Posterior vena cava (tissue), 2 donors: ENCODE measurements at regions of chr2 and their contacts with region 1.

Region 1: DNA sequence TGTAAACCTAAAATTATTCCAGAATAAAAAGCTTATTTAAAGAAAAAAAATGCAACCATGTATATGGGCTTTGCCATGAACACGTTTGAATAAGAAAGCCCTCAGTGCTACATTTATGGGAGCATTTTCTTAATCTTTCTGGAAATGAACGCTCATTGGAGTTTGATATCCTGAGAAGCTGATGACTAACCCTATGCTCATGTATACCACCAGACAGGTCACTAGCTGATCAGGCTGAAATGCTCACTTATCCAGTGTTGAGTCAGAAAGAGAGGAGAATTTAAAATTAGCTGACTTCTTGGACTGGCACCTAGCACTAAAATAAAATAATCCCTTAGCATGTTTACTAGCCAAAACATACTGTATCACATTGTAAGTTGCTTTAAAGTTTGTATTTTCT is 254.9 kb upstream of the SIX3 start:
- DNase-seq: no peak

Region 2: DNA sequence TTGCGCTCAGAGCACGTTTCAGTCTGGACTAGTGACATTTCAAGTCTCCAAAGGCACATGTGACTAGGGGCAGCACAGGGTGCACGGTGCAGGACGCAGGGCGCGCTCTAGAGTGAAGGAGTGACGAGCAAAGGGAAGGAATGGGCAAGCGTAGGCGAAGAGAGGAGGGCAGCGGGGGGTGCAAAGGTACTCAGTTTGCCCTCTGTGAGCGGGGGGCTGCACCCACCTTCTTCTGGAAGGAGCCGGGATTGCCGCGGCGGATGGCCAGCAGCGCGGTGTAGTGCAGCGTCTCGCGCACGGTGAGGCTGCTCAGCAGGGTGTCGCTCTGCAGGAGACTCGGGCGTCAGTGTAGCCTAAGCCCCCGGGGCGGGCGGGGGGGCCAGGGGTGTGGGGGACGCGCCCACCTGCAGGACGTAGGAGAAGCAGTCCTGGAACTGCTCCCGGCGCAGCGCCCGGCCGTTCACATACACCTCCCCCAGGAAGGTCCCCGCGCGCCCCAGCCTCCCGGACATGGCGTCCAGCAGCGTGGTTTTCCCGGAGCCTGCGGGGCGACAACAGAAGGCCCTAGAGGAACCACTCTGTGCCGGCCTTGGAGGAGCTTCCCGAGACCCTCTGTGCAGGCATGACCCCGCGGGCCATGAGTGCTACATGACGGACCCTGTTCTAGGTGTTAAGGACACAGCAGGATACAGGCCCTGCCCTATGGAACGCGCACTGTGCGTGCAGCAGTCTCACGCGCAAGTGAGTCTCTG is 854.8 kb before region 1 on chr2:
- intact Hi-C with region 1: loop called in 1 of 2 experiments (anchors 10 kb)
- DNase-seq: peak; percentile 82

Region 3: DNA sequence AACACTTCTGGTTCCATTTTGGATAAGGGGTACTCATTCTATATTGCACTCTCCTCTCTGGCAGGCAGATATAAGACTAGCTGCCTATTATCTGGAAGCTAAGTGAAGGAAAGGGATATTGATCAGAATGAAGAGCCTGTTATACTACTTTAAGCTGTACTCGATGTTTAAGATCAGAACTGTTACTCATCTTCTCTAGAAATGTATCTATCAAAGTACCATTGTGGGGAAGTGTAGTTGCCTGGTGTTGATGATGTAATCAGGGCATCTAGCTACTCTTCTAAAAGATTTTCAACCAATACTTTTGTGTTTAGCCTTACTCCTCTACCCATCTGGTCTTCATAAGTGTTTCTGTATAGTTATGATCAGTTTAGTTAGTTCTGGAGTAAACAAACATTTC is 319.0 kb before region 1 on chr2:
- intact Hi-C with region 1: no loop called
- DNase-seq: no peak

Region 4: DNA sequence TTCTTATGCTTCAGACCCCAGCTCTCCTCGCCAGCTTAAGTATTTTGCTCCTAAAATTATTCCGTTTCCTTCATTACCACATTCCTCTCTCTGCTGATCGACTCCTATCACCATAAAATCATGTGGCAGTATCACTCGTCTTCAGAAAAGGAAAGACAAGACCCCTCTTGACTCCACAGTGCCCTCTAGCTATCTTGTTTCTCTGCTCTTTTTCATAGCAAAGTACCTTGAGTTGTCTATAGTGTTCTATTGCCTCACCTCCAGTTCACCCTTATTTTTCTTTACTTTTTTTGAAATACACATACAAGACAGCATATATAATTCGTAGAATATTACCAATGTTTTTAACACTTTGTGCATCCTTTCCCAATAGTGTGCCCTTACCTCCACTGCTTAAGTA is 18.2 kb before region 1 on chr2:
- intact Hi-C with region 1: no loop called
- DNase-seq: no peak